IMR-90 (cell line): ENCODE measurements at regions of chr20 and their contacts with region 1.

Region 1: DNA sequence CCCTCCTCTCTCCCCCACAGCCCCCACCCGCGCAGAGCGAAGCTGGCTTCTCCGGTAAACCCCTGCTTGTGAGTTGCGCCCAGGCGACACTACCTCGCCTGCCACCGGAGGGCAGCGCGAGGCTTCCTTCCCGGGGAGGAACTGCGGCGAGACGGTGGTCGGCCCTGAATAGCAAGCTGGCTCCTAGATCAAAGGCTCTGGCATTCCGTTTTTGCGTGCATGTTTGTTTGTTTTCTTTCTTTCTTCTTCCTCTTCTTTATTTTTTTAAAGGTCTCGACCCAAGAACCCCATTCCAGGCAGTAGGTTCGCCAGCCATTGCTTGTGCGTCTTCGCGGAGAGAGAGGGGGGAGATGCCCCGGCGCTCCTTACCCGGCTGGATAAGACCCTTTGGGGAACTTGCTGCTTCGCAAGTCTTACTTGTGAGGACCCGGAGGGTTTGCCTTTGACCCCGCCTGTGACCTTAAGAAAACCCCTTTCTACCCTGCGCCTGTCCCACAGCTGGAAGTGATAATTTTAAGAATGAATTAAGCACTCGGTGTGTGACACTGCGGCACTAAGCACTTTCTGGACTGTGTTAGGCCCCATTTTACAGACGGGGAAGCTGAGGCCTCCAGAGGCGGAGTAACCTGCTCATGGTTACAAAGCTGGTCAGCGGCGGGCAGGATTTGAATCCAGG is 92.7 kb upstream of the SIRPA start:
- DNase-seq: peak; percentile 76
- ATAC-seq: peak; percentile 68
- H3K4me3 ChIP-seq: peak overlapping the region; percentile 50
- H3K27ac ChIP-seq: no peak overlapping the region
- H3K4me1 ChIP-seq: peaks cover 5% of the 10 kb centered on the region
- H3K27me3 ChIP-seq: peaks cover 2% of the 10 kb centered on the region; the same call in 1 of the 2 replicates
- CTCF ChIP-seq: peak; percentile 77
- POLR2A ChIP-seq: no peak
- RAD21 ChIP-seq: peak; percentile 84

Region 2: GRCh38 chr20:1844325-1845162 is 42.0 kb after region 1 on chr20:
- CTCF ChIA-PET with region 1: no interaction called
- POLR2A ChIA-PET with region 1: no interaction called
- dilution Hi-C with region 1: no loop called
- in situ Hi-C with region 1: no loop called
- intact Hi-C with region 1: loop called (anchors 1 kb)
- DNase-seq: peak; percentile 92
- ATAC-seq: peak; percentile 75
- H3K4me3 ChIP-seq: no peak overlapping the region
- H3K27ac ChIP-seq: peak overlapping the region; percentile 88
- H3K4me1 ChIP-seq: peaks cover 18% of the 10 kb centered on the region
- H3K27me3 ChIP-seq: no peaks in the 10 kb centered on the region
- CTCF ChIP-seq: no peak
- POLR2A ChIP-seq: no peak
- RAD21 ChIP-seq: no peak

Region 3: DNA sequence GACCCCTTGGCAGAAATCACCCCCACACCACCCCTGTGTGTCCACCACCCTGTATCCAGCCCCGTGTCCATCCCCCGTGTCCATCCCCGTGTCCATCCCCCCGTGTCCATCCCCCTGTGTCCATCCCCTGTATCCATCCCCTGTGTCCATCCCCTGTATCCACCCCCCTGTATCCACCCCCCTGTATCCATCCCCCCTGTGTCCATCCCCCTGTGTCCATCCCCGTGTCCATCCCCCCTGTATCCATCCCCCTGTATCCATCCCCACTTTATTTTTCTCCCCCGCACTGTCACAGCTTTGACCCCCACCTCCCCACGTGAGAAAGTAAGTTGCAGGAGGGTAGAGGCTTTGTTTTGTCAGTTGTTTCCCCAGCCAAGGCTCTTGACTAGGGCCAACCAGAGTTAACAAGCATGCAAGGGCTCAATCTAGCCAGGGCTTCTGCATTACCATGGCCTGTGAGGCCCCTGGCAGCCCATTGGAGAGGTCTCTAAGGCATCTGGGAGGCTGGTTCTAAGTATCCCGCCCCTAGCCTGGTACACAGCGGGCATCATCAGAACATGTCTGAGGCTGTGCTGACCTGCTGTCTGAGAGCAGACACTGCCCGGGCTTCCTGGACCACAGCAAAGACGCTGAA is 74.6 kb after region 1 on chr20:
- CTCF ChIA-PET with region 1: no interaction called
- POLR2A ChIA-PET with region 1: no interaction called
- dilution Hi-C with region 1: no loop called
- in situ Hi-C with region 1: no loop called
- intact Hi-C with region 1: no loop called
- DNase-seq: peak; percentile 35
- ATAC-seq: no peak
- H3K4me3 ChIP-seq: no peak overlapping the region
- H3K27ac ChIP-seq: no peak overlapping the region
- H3K4me1 ChIP-seq: peaks cover 7% of the 10 kb centered on the region
- H3K27me3 ChIP-seq: peaks cover 8% of the 10 kb centered on the region
- CTCF ChIP-seq: no peak
- POLR2A ChIP-seq: no peak
- RAD21 ChIP-seq: no peak

Region 4: GRCh38 chr20:1894951-1895673 is 92.6 kb after region 1 on chr20 and contains the start of gene SIRPA:
- CTCF ChIA-PET with region 1: interaction called, 6 read pairs
- POLR2A ChIA-PET with region 1: no interaction called
- dilution Hi-C with region 1: no loop called
- in situ Hi-C with region 1: loop called (anchors 5 kb)
- intact Hi-C with region 1: loop called (anchors 1 kb)
- DNase-seq: peak; percentile 64
- ATAC-seq: peak; percentile 65
- H3K4me3 ChIP-seq: peak within 1 kb of the TSS; percentile 77
- H3K27ac ChIP-seq: peak within 1 kb of the TSS; percentile 99
- H3K4me1 ChIP-seq: peaks cover 22% of the 10 kb centered on the region
- H3K27me3 ChIP-seq: no peaks in the 10 kb centered on the region
- CTCF ChIP-seq: no peak
- POLR2A ChIP-seq: peak; percentile 60
- RAD21 ChIP-seq: no peak
- total RNA-seq, gene SIRPA: 9.7 and 9.9 TPM in 2 replicates

Region 5: DNA sequence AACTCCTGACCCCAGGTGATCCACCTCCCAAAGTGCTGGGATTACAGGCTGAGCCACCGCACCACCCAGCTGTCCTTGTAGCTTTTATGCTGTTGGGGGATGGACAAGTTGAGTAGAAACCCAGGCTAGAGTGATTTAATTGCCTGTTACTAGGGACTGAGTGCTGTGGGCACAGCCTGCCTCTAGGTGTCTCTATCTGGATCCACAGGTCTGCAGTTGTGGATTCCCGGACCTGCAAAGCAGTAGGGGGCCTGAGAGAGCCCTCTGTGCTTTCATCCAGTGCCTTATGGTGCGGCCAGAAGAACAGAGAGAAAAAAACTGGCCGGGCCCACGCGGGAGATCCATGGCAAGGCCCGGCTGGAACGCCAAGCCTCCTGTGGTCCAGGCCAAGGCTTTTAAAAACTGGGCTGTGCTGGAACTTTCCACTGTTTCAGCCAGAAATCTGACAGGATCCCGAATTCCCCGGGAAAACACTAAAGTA is 97.8 kb after region 1 on chr20:
- CTCF ChIA-PET with region 1: interaction called, 6 read pairs
- POLR2A ChIA-PET with region 1: no interaction called
- dilution Hi-C with region 1: no loop called
- in situ Hi-C with region 1: loop called (anchors 5 kb)
- intact Hi-C with region 1: loop called (anchors 1 kb)
- DNase-seq: peak; percentile 80
- ATAC-seq: peak; percentile 90
- H3K4me3 ChIP-seq: no peak overlapping the region
- H3K27ac ChIP-seq: no peak overlapping the region
- H3K4me1 ChIP-seq: peaks cover 16% of the 10 kb centered on the region
- H3K27me3 ChIP-seq: no peaks in the 10 kb centered on the region
- CTCF ChIP-seq: peak; percentile 87
- POLR2A ChIP-seq: no peak
- RAD21 ChIP-seq: peak; percentile 64

Region 6: DNA sequence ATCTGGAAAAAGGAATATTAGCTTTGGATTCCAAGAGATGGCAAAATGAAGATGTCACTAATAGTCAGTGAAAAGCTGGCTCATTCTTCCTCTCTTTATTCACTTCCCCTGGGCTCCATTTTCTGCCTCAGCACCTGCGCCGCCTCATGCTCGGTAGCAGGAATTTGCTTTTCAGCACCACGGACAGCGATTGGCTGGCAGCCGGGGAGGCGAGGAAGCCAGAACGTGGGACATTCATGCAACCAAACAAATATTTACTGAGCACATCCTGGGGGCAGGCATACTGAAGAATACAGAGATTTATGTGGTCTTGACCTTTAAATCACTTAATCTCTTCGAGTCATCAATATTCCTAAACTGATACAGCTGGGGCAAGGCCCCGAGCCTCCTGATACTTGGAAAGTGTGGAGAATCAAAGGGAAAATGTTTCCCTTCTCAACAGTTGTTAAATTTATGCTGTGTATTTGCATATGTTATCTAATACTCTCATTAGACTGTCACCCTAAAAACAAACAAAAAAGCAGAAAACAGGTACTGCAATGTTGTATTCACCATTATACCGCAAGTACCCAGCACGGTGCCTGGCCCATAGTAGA is 203.4 kb after region 1 on chr20:
- CTCF ChIA-PET with region 1: no interaction called
- POLR2A ChIA-PET with region 1: no interaction called
- dilution Hi-C with region 1: no loop called
- in situ Hi-C with region 1: no loop called
- intact Hi-C with region 1: loop called (anchors 2 kb)
- DNase-seq: peak; percentile 45
- ATAC-seq: no peak; the same call in none of the 2 replicates
- H3K4me3 ChIP-seq: no peak overlapping the region
- H3K27ac ChIP-seq: no peak overlapping the region
- H3K4me1 ChIP-seq: no peaks in the 10 kb centered on the region
- H3K27me3 ChIP-seq: peaks cover 2% of the 10 kb centered on the region
- CTCF ChIP-seq: no peak
- POLR2A ChIP-seq: no peak
- RAD21 ChIP-seq: no peak

Region 7: GRCh38 chr20:2213401-2213800 is 410.9 kb after region 1 on chr20:
- CTCF ChIA-PET with region 1: no interaction called
- POLR2A ChIA-PET with region 1: no interaction called
- dilution Hi-C with region 1: no loop called
- in situ Hi-C with region 1: no loop called
- intact Hi-C with region 1: no loop called
- DNase-seq: no peak
- ATAC-seq: no peak
- H3K4me3 ChIP-seq: no peak overlapping the region
- H3K27ac ChIP-seq: no peak overlapping the region
- H3K4me1 ChIP-seq: no peaks in the 10 kb centered on the region
- H3K27me3 ChIP-seq: peaks cover 14% of the 10 kb centered on the region
- CTCF ChIP-seq: no peak
- POLR2A ChIP-seq: no peak
- RAD21 ChIP-seq: no peak